ENCODE measurements at regions of chr1 and their contacts with region 1.

Region 1: GRCh38 chr1:150010393-150011115 is at the start of gene OTUD7B:
- DNase-seq: peak; percentile 88
- ATAC-seq: peak; percentile 62
- H3K4me3 Mint-ChIP-seq: peak within 1 kb of the TSS; percentile 99
- H3K27ac Mint-ChIP-seq: peak within 1 kb of the TSS; percentile 99
- H3K4me1 Mint-ChIP-seq: peaks cover 37% of the 10 kb centered on the region
- H3K27me3 Mint-ChIP-seq: no peaks in the 10 kb centered on the region
- total RNA-seq, gene OTUD7B: 18.5 to 20.1 TPM

Region 2: DNA sequence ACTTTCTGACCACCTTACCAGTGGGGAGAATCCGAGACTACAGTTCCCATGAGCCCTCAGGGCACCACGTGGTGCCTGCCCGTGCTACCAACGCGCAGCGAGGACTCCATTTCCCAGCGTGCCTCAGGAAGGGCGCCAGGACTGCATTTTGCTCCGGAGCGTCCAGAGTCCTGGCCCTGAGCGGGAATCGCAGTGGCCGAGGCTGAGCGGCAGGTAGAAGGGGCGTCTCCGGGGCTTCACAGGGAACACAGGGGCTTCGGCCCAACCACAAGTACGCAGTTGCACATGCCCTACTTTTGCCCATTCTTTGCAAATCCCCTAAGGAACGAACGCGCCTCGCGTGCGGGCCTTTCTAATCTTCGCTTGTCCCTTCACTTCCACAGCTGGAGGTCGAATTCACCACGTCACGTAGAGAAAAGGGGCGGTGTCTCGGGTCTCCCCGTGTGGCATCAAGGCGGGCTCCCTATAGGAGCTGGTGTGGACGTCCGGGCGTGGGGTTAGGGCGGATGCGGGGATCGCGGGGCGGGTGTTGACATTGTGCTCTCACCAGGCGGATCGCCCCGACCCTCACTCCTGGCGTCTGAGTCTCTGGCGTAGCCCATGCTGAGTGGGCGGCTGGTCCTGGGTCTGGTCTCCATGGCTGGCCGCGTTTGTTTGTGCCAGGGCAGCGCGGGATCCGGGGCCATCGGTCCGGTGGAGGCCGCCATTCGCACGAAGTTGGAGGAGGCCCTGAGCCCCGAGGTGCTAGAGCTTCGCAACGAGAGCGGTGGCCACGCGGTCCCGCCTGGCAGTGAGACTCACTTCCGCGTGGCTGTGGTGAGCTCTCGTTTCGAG is 110.9 kb before region 1 on chr1 and contains the start of gene BOLA1:
- CTCF ChIA-PET with region 1: no interaction called
- POLR2A ChIA-PET with region 1: no interaction called
- intact Hi-C with region 1: loop called in 1 of 2 experiments (anchors 1 kb)
- DNase-seq: peak; percentile 91
- ATAC-seq: peak; percentile 99
- H3K4me3 Mint-ChIP-seq: peak within 1 kb of the TSS; percentile 89
- H3K27ac Mint-ChIP-seq: peak within 1 kb of the TSS; percentile 95
- H3K4me1 Mint-ChIP-seq: peaks cover 18% of the 10 kb centered on the region
- H3K27me3 Mint-ChIP-seq: no peaks in the 10 kb centered on the region
- total RNA-seq, gene BOLA1: 24.1 to 30.0 TPM

Region 3: DNA sequence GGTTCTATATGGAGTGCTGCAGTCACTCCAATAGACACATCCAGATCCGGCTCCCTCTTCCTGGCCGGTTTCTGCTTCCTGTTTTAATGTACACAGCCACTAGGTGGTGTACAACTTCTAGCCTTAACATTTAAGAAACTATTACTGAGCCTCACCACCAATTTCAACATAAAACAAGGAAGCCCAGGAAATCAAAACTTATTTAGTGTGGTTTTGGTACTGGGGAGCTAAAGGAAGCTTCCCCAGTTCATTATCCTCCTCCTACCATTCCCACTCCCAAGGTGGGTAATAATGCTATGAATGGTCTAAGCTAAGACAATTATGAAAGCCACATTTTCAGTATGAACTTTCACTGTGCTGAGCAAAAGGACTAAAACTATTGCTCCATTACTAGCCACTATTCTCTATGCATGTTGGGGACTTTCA is 48.4 kb before region 1 on chr1:
- CTCF ChIA-PET with region 1: interaction called, 9 read pairs
- POLR2A ChIA-PET with region 1: no interaction called
- intact Hi-C with region 1: loop called in 1 of 2 experiments (anchors 1 kb)
- DNase-seq: peak; percentile 52
- ATAC-seq: peak; percentile 71
- H3K4me3 Mint-ChIP-seq: no peak overlapping the region
- H3K27ac Mint-ChIP-seq: no peak overlapping the region
- H3K4me1 Mint-ChIP-seq: peaks cover 13% of the 10 kb centered on the region
- H3K27me3 Mint-ChIP-seq: no peaks in the 10 kb centered on the region

Region 4: DNA sequence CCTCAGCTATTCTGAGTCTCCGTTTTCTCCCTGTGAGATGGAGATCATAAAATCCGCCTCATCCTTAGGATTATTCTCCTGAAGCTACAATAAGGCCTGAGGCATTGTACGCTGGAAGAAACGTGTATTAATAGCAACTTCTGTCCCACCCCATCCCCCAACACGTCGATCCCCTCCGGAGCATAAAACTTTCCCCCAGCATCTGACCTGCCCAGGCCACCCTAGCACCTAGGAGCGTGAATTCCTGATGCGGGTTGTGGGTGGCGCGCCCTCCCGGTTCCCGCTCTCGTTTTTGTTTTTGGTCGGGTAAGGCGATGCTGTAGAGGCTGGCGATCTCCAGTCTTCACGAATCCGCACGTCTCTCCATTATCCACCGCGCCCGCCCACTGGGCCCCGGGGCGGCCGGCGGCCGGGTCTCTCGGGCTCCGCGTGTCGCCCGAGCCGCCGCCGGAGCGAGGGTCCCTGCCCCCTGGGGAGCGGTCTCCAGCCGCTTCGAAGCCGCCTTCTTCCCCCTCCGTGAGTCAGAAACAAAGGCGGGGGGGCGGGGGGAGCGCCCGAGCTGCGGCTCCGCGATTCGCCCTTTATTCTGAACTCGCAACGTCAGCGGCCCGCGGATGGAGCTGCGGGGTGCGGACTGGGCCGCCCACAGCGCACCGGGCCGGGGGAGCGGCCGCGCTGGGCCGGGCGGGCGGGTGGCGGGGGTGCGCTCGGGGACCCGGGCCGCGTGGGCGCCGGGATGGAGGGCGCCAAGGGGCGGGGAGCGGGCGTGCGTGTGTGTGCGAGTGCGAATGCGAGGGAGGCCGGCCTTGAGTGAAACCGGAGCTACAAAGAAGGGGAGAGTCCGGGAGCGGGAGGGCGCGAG is 138.9 kb after region 1 on chr1 and contains the start of gene PLEKHO1:
- CTCF ChIA-PET with region 1: no interaction called
- POLR2A ChIA-PET with region 1: no interaction called
- intact Hi-C with region 1: loop called in 1 of 2 experiments (anchors 1 kb)
- DNase-seq: peak; percentile 89
- ATAC-seq: peak; percentile 74
- H3K4me3 Mint-ChIP-seq: peak within 1 kb of the TSS; percentile 82
- H3K27ac Mint-ChIP-seq: peak within 1 kb of the TSS; percentile 86
- H3K4me1 Mint-ChIP-seq: peaks cover 51% of the 10 kb centered on the region
- H3K27me3 Mint-ChIP-seq: peaks cover 1% of the 10 kb centered on the region
- total RNA-seq, gene PLEKHO1: 13.2 TPM

Region 5: DNA sequence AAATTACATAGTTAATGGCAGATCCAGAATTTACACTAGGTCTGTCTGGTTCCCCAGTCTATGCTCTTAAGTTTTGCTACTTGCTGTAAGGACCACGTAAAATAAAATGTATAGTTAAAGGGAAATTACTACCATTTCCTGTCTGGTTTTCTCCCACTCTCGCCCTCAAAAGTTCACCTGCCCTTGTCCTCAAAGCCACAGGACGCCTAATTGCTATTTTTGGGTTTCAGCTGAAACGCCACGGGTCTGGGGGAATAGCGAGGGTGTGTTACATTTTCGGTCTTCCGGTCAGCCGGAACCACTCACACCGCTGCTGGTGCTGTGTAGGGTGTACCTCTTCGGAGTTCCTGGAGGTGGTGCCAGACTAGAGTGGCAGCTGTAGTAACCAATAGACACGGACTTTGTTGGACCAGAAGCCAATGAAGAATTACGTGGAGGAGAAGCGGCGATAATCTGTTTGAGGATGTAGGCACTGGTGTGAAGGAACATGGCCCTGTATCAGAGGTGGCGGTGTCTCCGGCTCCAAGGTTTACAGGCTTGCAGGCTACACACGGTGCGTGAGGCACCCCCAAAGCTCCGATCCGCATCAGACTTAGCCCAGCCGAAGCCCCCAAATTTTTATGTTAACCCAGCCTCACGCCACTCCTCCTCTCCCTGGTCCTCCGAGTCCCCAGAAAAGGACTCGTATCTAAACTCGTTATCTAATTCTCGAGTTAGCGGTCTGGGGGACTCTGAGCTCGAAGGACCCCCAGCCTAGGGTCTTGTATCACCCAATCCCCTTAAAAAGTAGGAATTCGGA is 476.6 kb after region 1 on chr1 and contains the start of gene TARS2:
- CTCF ChIA-PET with region 1: no interaction called
- POLR2A ChIA-PET with region 1: no interaction called
- intact Hi-C with region 1: loop called in 1 of 2 experiments (anchors 5 kb)
- DNase-seq: peak; percentile 96
- ATAC-seq: peak; percentile 100
- H3K4me3 Mint-ChIP-seq: peak within 1 kb of the TSS; percentile 96
- H3K27ac Mint-ChIP-seq: peak within 1 kb of the TSS; percentile 99
- H3K4me1 Mint-ChIP-seq: peaks cover 13% of the 10 kb centered on the region
- H3K27me3 Mint-ChIP-seq: no peaks in the 10 kb centered on the region
- total RNA-seq, gene TARS2: 43.8 to 58.6 TPM

Measured in activated CD4-positive, alpha-beta T cell treated with anti-CD3 and anti-CD28 coated beads for 36 hours (primary cell).